BJ (cell line): ENCODE measurements at regions of chr17 and their contacts with region 1.

Region 1: GRCh38 chr17:40075201-40075941 is 12.6 kb downstream of the THRA start:
- DNase-seq: no peak
- H3K4me3 ChIP-seq: no peak overlapping the region
- H3K27me3 ChIP-seq: no peaks in the 10 kb centered on the region
- CTCF ChIP-seq: peak; percentile 93

Region 2: DNA sequence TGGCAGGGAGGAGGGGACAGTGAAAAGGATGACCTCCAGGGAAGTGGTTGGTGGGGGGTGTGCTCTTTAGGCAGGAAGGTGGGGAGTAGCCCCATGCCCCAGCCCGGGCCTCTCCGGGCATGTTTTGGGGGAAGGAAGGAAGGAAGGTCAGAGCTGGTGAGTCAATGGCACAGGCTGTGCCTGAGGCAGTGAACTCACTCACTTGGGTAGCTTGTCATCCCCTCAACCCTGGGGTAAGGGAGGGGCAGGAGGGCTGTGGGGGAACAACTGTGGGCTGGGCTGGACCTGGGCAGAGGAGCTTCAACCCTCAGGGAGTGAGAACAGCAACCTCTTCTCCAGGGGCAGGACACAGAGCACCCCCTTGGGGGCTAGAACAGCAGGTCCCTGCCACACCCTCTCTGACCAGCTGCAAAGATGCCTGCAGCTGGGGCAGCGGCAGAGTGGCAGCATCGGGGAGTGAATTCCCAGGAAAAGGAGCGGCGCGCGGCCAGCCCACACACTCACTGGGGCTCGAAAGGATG is 53.9 kb before region 1 on chr17:
- CTCF ChIA-PET with region 1: interaction called, 23 read pairs
- POLR2A ChIA-PET with region 1: no interaction called
- DNase-seq: peak; percentile 62
- H3K4me3 ChIP-seq: no peak overlapping the region
- H3K27me3 ChIP-seq: no peaks in the 10 kb centered on the region
- CTCF ChIP-seq: no peak

Region 3: DNA sequence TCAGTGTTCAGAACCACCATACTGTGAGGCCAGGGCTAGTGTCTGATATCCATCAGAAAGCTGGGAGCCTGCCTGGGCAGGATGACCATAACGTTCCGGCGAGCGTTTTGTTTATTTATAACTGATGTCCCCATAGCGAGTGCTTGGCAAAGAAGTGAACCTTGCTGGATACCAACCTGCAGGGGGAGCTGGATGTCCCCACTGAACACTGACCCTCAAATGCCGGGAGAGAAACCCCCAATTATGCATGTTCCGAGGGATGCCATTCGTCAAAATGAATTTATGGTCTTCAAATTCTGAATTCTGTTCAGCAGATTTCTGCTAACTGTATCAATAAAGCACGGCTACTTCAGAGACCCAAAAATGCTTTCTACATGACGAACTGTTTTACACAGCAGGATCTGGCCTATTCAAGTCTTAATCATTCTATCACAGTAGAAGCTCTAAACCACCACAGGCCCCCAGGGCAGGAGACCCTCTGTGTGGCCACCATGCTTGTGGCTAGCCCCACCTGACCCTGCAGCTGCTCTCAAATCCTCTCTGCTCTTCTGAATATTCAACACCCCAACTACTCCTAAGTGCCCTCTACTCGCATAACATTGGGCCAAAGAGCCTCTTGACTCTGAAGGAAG is 36.4 kb before region 1 on chr17:
- CTCF ChIA-PET with region 1: interaction called, 15 read pairs
- POLR2A ChIA-PET with region 1: no interaction called
- DNase-seq: peak; percentile 69
- H3K4me3 ChIP-seq: no peak overlapping the region
- H3K27me3 ChIP-seq: no peaks in the 10 kb centered on the region
- CTCF ChIP-seq: peak; percentile 91

Region 4: GRCh38 chr17:40086150-40087044 is 11.0 kb after region 1 on chr17:
- CTCF ChIA-PET with region 1: interaction called, 48 read pairs
- POLR2A ChIA-PET with region 1: no interaction called
- DNase-seq: no peak
- H3K4me3 ChIP-seq: no peak overlapping the region
- H3K27me3 ChIP-seq: no peaks in the 10 kb centered on the region
- CTCF ChIP-seq: peak; percentile 82

Region 5: DNA sequence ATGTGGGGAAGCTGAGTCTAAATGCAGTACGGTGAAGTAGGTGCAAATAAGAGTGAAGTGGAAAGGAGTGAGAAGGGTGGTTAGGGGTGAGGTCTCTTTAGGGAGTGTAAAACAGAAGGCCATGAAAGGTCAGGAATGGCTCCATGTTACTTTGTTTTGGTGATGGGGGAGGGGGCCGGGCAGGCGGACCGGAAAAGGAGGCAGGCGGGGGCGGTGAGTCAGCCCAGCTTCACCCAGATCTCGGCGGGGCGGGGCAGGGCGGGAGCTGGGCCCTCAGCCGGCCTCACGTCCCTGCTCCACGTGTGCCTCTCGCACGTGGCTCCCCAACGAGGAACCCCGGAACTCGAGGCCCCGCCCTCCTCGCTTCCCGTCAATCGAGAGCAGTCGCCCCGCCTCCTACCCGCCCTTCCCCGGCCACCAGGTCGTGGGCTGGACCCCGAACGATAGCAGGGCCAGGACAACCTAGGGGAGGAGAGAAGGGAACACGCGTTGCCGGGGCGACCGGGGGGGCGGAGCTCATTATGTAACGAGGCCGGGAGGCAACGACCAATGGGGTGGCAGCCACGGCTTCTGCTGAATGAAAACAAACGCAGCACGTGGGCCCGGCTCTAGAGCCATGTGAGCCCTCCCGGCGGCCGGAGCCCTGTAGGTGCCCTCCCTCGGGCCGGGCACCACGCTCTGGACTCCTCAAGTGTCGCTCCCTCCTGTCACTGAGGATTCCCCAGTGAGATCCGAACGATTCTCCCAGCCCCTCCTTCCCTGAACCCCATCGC is 23.7 kb after region 1 on chr17:
- CTCF ChIA-PET with region 1: interaction called, 23 read pairs
- POLR2A ChIA-PET with region 1: interaction called, 3 read pairs
- DNase-seq: peak; percentile 98
- H3K4me3 ChIP-seq: peak overlapping the region; percentile 89
- H3K27me3 ChIP-seq: no peaks in the 10 kb centered on the region
- CTCF ChIP-seq: no peak